Activated CD8-positive, alpha-beta T cell treated with anti-CD3 and anti-CD28 coated beads, Interleukin-2, amount 10 ng/mL, durations not matched to agents 7 days and 5 days (primary cell): ENCODE measurements at regions of chr19 and their contacts with region 1.

Region 1: GRCh38 chr19:8688930-8689329 is 9.7 kb downstream of the ACTL9 start:
- DNase-seq: no peak
- ATAC-seq: no peak
- H3K4me3 Mint-ChIP-seq: no peak overlapping the region
- H3K27ac Mint-ChIP-seq: no peak overlapping the region
- H3K4me1 Mint-ChIP-seq: peaks cover 30% of the 10 kb centered on the region
- H3K27me3 Mint-ChIP-seq: peaks cover 34% of the 10 kb centered on the region

Region 2: GRCh38 chr19:8589177-8589714 is 99.7 kb before region 1 on chr19:
- CTCF ChIA-PET with region 1: no interaction called
- POLR2A ChIA-PET with region 1: no interaction called
- DNase-seq: no peak
- ATAC-seq: no peak
- H3K4me3 Mint-ChIP-seq: no peak overlapping the region
- H3K27ac Mint-ChIP-seq: no peak overlapping the region
- H3K4me1 Mint-ChIP-seq: peaks cover 10% of the 10 kb centered on the region
- H3K27me3 Mint-ChIP-seq: peaks cover 12% of the 10 kb centered on the region

Region 3: DNA sequence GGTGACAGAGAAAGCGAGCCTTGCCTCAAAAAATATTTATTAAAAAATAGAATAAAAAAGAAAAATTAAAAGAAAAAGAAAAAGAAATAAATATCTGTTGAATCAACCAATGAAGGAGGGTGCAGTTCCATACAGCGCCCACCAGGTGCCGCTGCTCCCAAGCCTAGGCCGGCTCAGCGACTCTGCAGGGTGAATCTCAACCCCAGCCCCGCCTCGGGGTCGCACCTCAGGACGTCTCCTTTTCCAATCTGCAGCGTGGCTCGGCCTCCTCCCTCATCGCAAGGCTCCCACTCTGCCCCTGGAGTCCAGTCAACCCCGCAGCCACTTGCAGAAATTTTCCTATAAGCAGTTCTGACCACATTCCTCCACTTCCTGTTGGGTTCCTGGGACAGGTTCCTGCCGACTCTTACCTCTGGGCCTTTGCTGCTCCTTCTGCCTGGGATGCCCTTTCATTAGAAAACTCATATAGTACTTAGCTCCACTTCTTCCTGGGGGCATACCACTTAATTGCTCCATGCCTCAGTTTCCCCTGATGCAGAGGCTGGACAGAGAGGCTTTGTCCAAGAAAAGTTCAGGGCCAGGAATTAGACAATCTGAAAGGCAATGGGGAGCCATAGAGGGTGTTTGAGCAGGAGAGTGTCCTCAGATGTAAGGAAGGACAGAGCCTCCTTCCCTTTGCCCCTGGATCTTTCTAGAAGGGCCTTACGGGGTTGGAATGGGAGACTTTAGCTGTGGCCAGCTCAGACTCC is 34.2 kb before region 1 on chr19:
- CTCF ChIA-PET with region 1: interaction called, 129 read pairs
- POLR2A ChIA-PET with region 1: interaction called, 9 read pairs
- DNase-seq: peak; percentile 80
- ATAC-seq: peak; percentile 70
- H3K4me3 Mint-ChIP-seq: peak overlapping the region; percentile 55
- H3K27ac Mint-ChIP-seq: peak overlapping the region; percentile 66
- H3K4me1 Mint-ChIP-seq: peaks cover 32% of the 10 kb centered on the region
- H3K27me3 Mint-ChIP-seq: peaks cover 24% of the 10 kb centered on the region